Adrenal gland (tissue), 19 donors: ENCODE measurements at regions of chr9 and their contacts with region 1.

Region 1: GRCh38 chr9:38017149-38017884 is 51.7 kb downstream of the SHB start:
- DNase-seq: peak in 6 of 7 donors; percentile 67 to 84 (median 78)
- H3K4me3 ChIP-seq: no peak overlapping the region
- H3K27ac ChIP-seq: no peak overlapping the region
- H3K4me1 ChIP-seq: peaks cover 0 to 37% of the 10 kb centered on the region in 2 donors
- H3K27me3 ChIP-seq: no peaks in the 10 kb centered on the region
- CTCF ChIP-seq: peak; percentile 11 to 63 (median 49)
- POLR2A ChIP-seq: no peak

Region 2: GRCh38 chr9:37876376-37876775 is 140.9 kb before region 1 on chr9:
- intact Hi-C with region 1: no loop called
- DNase-seq: peak in 1 of 7 donors; percentile 27
- H3K4me3 ChIP-seq: no peak overlapping the region
- H3K27ac ChIP-seq: no peak overlapping the region
- H3K4me1 ChIP-seq: no peaks in the 10 kb centered on the region
- H3K27me3 ChIP-seq: no peaks in the 10 kb centered on the region
- CTCF ChIP-seq: no peak
- POLR2A ChIP-seq: no peak

Region 3: GRCh38 chr9:37994639-37995347 is 22.5 kb before region 1 on chr9:
- intact Hi-C with region 1: no loop called
- DNase-seq: peak; percentile 62 to 90 (median 72)
- H3K4me3 ChIP-seq: no peak overlapping the region
- H3K27ac ChIP-seq: peak overlapping the region in 4 of 5 donors; percentile 35 to 83 (median 56)
- H3K4me1 ChIP-seq: peaks cover 0 to 21% of the 10 kb centered on the region in 2 donors
- H3K27me3 ChIP-seq: no peaks in the 10 kb centered on the region
- CTCF ChIP-seq: peak in 1 of 6 experiments; percentile 13
- POLR2A ChIP-seq: no peak

Region 4: DNA sequence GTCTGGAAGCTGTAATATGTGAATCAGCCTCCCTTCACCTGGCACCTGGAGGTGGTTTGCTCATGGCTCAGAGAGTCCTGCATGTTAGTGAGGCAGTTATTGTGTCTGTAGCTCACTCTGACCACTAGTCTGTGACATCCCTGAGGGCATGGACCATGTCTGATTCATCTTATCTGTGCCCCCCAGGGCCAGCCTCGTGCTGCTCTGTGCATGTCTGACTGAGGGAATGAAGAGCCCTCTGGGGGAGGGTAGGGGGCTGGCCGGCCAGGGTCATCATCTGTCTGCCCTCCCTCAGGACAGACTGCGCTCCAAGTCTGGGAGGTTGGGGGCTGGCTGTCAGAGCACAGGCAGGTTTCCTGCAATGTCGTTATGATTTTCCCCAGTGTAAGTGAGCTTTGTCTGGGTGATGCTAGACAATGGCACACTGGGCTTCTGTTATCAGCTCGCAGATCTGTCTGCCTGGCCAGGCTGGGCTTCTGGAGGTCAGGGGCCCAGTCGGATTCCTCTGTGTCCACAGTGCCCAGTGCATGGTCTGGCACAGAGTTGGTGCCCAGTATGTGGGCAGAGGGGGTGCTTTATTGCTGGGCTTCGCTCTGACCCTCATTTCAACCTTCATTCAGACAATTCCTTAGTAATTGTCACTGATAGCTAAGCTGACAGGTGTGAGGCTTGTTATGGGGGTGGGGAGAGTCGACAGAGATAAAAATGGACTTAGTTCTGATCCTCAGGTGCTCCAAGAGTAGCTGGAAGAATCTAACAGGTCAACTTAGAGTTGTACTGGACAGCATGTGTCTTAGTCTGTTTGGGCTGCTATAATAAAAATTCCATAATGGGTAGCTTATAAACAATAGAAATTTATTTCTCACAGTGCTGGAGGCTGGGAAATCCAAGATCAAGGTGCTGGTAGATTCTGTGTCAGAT is 137.4 kb after region 1 on chr9:
- intact Hi-C with region 1: loop called in 1 of 2 experiments (anchors 10 kb)
- DNase-seq: peak in 1 of 7 donors; percentile 28
- H3K4me3 ChIP-seq: no peak overlapping the region
- H3K27ac ChIP-seq: no peak overlapping the region
- H3K4me1 ChIP-seq: no peaks in the 10 kb centered on the region
- H3K27me3 ChIP-seq: no peaks in the 10 kb centered on the region
- CTCF ChIP-seq: no peak
- POLR2A ChIP-seq: no peak